Activated naive CD4-positive, alpha-beta T cell treated with anti-CD3 and anti-CD28 coated beads for 36 hours (primary cell): ENCODE measurements at regions of chr14 and their contacts with region 1.

Region 1: DNA sequence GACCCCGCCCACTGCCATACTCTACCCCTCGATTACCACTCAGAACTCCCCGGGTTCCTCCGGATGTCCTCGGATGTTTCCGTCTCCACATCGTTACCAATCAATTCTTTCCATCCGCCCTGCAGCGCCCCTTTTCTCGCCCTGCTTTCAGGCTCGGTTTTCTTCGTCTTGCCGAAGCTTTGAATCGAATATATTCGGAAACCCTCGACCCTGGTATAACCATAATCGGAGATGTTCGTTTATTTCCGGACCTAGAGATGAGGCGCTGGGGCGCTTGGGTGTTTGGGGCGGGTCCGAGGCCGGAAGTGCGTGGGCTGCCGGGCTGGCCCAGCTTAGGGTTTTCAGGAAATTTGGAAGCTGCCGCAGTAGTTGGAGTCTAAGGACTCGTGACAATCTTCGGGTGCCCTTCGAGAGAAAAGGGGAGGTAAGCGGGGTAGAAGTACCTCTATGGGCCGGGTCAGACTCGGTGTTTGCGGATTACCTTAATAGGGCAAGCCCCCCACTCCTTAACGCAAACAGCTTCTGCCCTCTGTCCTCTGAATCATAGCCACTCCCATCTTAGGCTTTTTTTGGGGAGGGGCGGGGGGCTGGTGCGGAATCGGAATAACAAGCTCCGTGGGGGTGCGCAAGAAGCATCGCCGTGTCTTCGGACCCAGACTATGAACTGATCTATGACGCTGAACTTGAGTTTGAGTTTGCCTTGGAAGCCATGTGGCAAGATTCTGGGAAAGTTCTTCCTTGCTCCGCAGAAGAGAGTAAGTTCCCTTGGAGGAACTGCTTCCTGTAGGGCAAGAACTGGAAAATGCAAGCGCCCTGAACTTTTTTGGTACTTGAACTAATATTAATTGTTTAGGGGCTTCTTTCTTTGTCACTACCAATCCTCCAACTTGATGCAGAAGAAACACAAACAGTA is at the start of gene C14orf119:
- DNase-seq: peak; percentile 100
- H3K4me3 Mint-ChIP-seq: no peak within 1 kb of the TSS
- H3K27ac Mint-ChIP-seq: no peak within 1 kb of the TSS
- H3K4me1 Mint-ChIP-seq: peaks cover 38% of the 10 kb centered on the region
- H3K27me3 Mint-ChIP-seq: no peaks in the 10 kb centered on the region
- total RNA-seq, gene C14orf119: 39.8 to 44.2 TPM

Region 2: GRCh38 chr14:22918804-22919600 is 176.4 kb before region 1 on chr14 and contains the start of gene RBM23:
- CTCF ChIA-PET with region 1: no interaction called
- intact Hi-C with region 1: loop called (anchors 1 kb)
- DNase-seq: peak; percentile 100
- H3K4me3 Mint-ChIP-seq: peak within 1 kb of the TSS; percentile 94
- H3K27ac Mint-ChIP-seq: peak within 1 kb of the TSS; percentile 99
- H3K4me1 Mint-ChIP-seq: peaks cover 42% of the 10 kb centered on the region
- H3K27me3 Mint-ChIP-seq: peaks cover 3% of the 10 kb centered on the region
- total RNA-seq, gene RBM23: 53.5 to 61.2 TPM

Region 3: DNA sequence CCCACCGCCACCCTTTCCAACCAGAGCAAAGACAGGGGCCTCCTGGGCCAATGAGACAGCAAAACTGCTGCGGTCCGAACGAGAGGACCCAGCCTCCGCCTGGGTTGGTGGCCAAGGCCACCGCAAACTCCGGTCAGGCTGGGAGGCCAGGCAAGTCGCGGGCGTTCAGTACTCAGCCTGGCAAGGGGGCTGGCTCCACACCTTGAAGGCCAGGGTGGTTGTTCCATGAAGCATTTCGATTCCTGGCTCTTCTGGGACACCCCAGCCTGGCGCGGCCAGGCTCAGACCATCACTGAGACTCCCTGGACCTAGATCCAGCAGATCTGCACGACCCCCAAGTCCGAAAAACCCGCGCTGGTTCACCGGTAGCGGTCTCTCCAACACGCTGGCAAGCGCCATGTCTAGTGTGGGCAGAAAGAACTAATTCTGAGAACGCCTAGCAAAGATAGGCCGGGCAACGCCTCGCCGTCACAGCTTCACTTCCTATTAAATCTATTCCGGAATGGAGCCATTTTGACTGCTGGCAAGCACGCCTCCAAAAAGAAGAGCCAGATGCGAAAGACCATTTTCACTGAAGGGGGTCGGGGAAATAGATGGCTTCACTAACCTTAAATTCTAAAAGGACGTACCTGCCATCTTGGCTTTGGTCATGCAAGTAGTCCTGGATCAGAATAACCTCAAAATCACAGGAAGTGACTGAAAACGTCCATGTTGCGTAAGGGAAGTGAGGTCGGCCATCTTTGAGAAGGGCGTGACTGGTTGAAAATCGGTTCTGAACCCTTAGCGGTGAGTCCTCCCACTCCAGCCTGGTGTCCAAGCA is 60.8 kb before region 1 on chr14 and contains the start of gene PSMB5:
- CTCF ChIA-PET with region 1: no interaction called
- intact Hi-C with region 1: loop called (anchors 1 kb)
- DNase-seq: peak; percentile 96
- H3K4me3 Mint-ChIP-seq: peak within 1 kb of the TSS; percentile 88
- H3K27ac Mint-ChIP-seq: peak within 1 kb of the TSS; percentile 96
- H3K4me1 Mint-ChIP-seq: peaks cover 34% of the 10 kb centered on the region
- H3K27me3 Mint-ChIP-seq: no peaks in the 10 kb centered on the region
- total RNA-seq, gene PSMB5: 120 to 125 TPM

Region 4: GRCh38 chr14:23045419-23046357 is 49.8 kb before region 1 on chr14:
- CTCF ChIA-PET with region 1: no interaction called
- intact Hi-C with region 1: no loop called
- DNase-seq: no peak
- H3K4me3 Mint-ChIP-seq: no peak overlapping the region
- H3K27ac Mint-ChIP-seq: no peak overlapping the region
- H3K4me1 Mint-ChIP-seq: no peaks in the 10 kb centered on the region
- H3K27me3 Mint-ChIP-seq: peaks cover 3% of the 10 kb centered on the region

Region 5: DNA sequence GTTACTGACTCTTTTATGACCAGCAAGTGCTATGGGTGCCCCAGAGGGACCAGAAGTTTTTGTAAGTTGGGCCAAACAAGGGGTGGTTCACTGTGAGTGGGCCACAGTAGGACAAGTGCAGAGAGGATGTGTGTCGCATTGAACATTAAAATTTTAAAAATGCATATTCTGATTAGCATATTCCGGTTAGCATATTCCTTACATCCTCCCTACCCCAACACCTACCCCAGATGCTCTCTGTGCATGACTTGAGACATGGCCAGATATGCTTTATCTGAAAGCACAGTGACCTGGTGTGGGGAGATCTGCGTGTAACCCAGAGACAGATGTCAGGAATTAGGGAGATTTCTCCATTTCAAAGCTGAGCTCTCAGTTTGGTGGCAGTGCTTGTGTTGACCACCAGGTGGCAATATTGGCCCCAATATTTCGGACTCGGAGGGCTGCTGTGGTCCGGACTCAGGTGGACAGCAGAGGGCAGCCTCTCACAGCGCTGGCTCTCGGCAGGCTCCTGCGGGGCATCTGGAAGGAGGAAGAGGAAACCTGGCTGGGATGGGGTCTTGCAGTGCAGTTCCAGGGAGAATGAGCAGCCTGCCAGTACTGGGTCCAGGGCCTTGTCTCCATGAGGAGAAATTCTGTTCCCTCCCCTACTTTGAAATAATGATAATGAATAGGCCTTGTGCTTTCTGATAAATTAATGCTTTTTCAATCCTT is 25.2 kb after region 1 on chr14:
- CTCF ChIA-PET with region 1: interaction called, 38 read pairs
- intact Hi-C with region 1: loop called (anchors 1 kb)
- DNase-seq: peak; percentile 94
- H3K4me3 Mint-ChIP-seq: no peak overlapping the region
- H3K27ac Mint-ChIP-seq: peak overlapping the region; percentile 87
- H3K4me1 Mint-ChIP-seq: peaks cover 41% of the 10 kb centered on the region
- H3K27me3 Mint-ChIP-seq: no peaks in the 10 kb centered on the region

Region 6: DNA sequence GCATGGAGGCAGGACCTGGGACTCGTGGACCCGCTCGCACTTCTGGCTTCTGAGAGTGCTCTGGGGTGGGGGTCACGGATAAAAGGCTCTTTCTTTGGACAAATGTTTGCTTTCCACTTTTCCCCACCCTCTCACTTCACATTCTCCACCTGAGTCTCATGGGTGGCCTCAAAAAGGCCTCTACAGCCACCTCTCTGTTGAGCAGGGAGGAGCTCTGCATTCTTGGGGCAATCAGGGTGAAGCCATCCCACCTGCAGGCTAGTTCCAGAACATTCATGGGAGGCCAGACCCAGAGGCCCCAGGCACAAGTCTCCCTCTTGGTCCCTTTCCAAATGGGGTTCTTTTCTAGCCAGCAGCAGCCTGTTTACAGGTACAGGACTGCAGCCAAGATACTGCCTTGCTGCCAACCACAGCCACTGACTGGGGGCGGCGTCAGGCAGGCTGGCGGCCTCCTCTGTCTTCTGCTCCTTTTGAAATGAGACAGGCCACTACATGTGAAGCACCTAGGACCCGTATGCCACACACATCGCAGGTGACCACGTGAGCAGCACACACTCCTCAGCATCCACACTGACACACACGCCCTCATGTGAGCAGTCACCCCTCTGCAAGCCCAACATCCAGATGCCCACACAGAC is 41.9 kb after region 1 on chr14:
- CTCF ChIA-PET with region 1: no interaction called
- intact Hi-C with region 1: no loop called
- DNase-seq: no peak
- H3K4me3 Mint-ChIP-seq: no peak overlapping the region
- H3K27ac Mint-ChIP-seq: no peak overlapping the region
- H3K4me1 Mint-ChIP-seq: no peaks in the 10 kb centered on the region
- H3K27me3 Mint-ChIP-seq: no peaks in the 10 kb centered on the region

Region 7: GRCh38 chr14:23301288-23301968 is 206.0 kb after region 1 on chr14:
- CTCF ChIA-PET with region 1: interaction called, 3 read pairs
- intact Hi-C with region 1: loop called (anchors 1 kb)
- DNase-seq: peak; percentile 96
- H3K4me3 Mint-ChIP-seq: peak overlapping the region; percentile 90
- H3K27ac Mint-ChIP-seq: peak overlapping the region; percentile 92
- H3K4me1 Mint-ChIP-seq: peaks cover 12% of the 10 kb centered on the region
- H3K27me3 Mint-ChIP-seq: peaks cover 13% of the 10 kb centered on the region

Region 8: GRCh38 chr14:24146978-24147760 is 1051.7 kb after region 1 on chr14 and contains the start of gene RNF31:
- CTCF ChIA-PET with region 1: no interaction called
- intact Hi-C with region 1: loop called (anchors 5 kb)
- DNase-seq: peak; percentile 99
- H3K4me3 Mint-ChIP-seq: peak within 1 kb of the TSS; percentile 97
- H3K27ac Mint-ChIP-seq: peak within 1 kb of the TSS; percentile 99
- H3K4me1 Mint-ChIP-seq: peaks cover 54% of the 10 kb centered on the region
- H3K27me3 Mint-ChIP-seq: no peaks in the 10 kb centered on the region
- total RNA-seq, gene RNF31: 51.1 to 53.8 TPM